OCI-LY7 (cell line): ENCODE measurements at regions of chr14 and their contacts with region 1.

Region 1: GRCh38 chr14:49633640-49634546 is 1.2 kb downstream of the DNAAF2 start:
- DNase-seq: peak; percentile 98
- H3K4me3 ChIP-seq: peak overlapping the region; percentile 78
- H3K27ac ChIP-seq: peak overlapping the region; percentile 93
- H3K4me1 ChIP-seq: peaks cover 31% of the 10 kb centered on the region
- CTCF ChIP-seq: peak; percentile 87

Region 2: DNA sequence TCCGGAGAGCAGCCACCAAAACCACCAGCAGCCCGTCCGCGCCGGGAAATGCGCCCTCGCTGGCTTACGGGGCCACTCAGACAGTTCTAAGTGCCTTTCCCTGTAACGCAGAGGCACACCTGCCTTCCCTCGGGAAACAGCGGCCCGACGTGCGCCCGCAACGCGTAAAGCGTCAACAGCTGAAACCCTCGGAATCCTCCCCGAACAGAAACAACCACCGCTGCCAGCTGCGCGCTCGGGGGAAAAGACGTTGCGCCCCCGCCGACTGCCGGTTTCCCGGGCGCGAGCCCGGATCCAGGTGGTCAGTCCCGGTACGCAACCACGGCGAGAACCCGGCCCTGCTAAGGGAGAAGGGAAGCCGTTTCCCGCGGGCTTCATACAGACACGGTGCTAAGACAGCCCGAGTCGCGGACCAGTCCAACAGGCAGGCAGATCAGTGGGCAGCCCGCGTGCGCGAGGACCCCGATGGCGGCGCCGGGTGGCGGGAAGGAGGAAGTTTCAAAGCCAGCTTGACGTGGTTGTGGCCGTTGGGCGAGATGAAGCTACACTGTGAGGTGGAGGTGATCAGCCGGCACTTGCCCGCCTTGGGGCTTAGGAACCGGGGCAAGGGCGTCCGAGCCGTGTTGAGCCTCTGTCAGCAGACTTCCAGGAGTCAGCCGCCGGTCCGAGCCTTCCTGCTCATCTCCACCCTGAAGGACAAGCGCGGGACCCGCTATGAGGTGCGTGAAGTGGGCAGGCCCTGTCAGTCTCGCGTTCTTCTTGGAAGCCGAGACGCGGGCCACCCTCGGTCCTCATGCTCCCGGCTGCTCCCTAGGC is 35.2 kb before region 1 on chr14 and contains the start of gene LRR1:
- CTCF ChIA-PET with region 1: interaction called, 5 read pairs
- POLR2A ChIA-PET with region 1: interaction called, 6 read pairs
- intact Hi-C with region 1: loop called (anchors 1 kb)
- DNase-seq: peak; percentile 88
- H3K4me3 ChIP-seq: peak within 1 kb of the TSS; percentile 99
- H3K27ac ChIP-seq: peak within 1 kb of the TSS; percentile 94
- H3K4me1 ChIP-seq: peaks cover 40% of the 10 kb centered on the region
- CTCF ChIP-seq: no peak
- total RNA-seq, gene LRR1: 83.4 and 89.8 TPM in 2 replicates

Region 3: DNA sequence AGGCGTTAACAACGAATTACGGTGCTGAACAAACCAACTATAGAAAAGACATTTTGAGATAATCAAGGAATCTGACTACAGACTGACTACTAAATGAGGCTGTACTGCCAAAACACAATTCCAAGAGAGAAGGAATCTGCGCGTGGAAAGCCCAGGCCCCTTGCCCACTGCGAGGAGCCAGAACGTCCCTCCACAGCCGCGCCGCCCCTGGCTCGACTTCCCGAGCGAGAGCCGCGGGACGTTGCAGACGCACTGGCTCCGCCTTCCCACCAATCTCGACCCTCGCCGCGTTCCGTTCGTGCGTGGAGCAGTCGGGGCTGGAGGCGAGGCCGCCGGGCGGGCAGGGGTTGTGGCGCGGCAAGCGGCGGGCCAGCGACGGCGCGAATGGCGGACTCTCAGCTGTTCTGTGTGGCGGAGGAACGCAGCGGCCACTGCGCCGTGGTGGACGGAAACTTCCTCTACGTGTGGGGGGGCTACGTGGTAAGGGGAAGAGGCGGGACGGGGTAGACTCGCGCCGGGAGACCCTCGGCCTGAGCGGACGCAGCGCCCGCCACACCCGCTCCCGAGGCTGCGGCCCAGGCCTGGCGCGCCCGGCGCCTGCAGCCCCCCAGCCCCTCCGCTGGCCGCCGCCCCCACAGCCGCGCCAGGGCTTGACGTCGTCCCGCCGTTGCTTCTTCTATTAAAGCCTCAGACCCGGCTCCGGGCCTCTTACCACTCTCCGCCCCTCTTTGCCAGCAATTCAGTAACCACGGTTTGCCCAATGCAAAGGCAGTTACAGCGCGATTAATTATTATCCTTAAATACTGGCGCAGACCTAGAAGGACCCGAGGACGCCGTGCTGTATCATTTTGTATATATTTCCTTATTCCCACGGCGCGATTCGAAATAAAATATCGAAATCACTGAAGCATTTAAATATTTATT is 59.2 kb after region 1 on chr14 and contains the start of gene KLHDC1:
- CTCF ChIA-PET with region 1: no interaction called
- POLR2A ChIA-PET with region 1: interaction called, 5 read pairs
- intact Hi-C with region 1: loop called (anchors 2 kb)
- DNase-seq: peak; percentile 63
- H3K4me3 ChIP-seq: peak within 1 kb of the TSS; percentile 66
- H3K27ac ChIP-seq: no peak within 1 kb of the TSS
- H3K4me1 ChIP-seq: peaks cover 26% of the 10 kb centered on the region
- CTCF ChIP-seq: no peak
- total RNA-seq, gene KLHDC1: 0.25 and 0.26 TPM in 2 replicates

Region 4: GRCh38 chr14:49828640-49829039 is 194.7 kb after region 1 on chr14:
- CTCF ChIA-PET with region 1: no interaction called
- POLR2A ChIA-PET with region 1: interaction called, 5 read pairs
- intact Hi-C with region 1: loop called (anchors 1 kb)
- DNase-seq: no peak
- H3K4me3 ChIP-seq: no peak overlapping the region
- H3K27ac ChIP-seq: no peak overlapping the region
- H3K4me1 ChIP-seq: no peaks in the 10 kb centered on the region
- CTCF ChIP-seq: no peak

Region 5: DNA sequence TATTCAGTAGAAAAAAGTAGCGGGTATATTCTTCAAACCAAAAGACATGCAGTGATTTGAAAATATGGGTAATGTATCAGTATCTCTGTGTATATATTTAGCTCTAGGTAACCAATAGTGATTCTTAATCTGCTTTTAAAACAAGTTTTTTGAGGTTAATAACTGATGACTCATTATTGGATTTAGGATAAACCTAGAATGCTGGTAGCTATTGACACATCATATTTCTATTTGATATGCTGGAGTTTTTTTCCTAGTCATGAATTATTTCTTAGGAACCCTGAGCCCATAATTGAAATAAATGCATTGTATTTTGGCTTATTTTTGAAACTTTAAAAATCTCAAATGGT is 274.5 kb after region 1 on chr14:
- CTCF ChIA-PET with region 1: no interaction called
- POLR2A ChIA-PET with region 1: no interaction called
- intact Hi-C with region 1: no loop called
- DNase-seq: no peak
- H3K4me3 ChIP-seq: no peak overlapping the region
- H3K27ac ChIP-seq: no peak overlapping the region
- H3K4me1 ChIP-seq: peaks cover 4% of the 10 kb centered on the region
- CTCF ChIP-seq: no peak

Region 6: DNA sequence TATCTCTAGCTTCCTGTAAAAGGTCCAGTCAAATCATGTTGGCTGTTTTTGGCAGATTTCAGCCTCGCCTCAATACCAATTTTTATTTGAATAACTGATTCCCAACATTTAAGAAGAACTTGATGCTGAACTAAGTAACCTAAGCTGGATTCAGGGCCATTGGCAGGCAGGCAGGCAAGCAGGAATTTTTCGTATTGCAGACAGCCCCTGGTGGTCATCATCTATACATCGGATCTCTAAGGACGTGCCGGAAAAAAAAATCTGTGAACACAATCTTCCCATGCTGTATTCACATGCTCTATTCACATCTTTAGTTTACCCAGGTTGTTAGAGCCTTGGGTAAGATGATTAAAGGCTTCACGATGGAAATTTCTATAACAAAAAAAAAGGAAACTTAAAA is 475.4 kb after region 1 on chr14:
- CTCF ChIA-PET with region 1: no interaction called
- POLR2A ChIA-PET with region 1: no interaction called
- intact Hi-C with region 1: loop called (anchors 2 kb)
- DNase-seq: no peak
- H3K4me3 ChIP-seq: no peak overlapping the region
- H3K27ac ChIP-seq: no peak overlapping the region
- H3K4me1 ChIP-seq: peaks cover 21% of the 10 kb centered on the region
- CTCF ChIP-seq: 0 out of 2 replicates have a peak, but pooled peaks have one; percentile 35

Region 7: DNA sequence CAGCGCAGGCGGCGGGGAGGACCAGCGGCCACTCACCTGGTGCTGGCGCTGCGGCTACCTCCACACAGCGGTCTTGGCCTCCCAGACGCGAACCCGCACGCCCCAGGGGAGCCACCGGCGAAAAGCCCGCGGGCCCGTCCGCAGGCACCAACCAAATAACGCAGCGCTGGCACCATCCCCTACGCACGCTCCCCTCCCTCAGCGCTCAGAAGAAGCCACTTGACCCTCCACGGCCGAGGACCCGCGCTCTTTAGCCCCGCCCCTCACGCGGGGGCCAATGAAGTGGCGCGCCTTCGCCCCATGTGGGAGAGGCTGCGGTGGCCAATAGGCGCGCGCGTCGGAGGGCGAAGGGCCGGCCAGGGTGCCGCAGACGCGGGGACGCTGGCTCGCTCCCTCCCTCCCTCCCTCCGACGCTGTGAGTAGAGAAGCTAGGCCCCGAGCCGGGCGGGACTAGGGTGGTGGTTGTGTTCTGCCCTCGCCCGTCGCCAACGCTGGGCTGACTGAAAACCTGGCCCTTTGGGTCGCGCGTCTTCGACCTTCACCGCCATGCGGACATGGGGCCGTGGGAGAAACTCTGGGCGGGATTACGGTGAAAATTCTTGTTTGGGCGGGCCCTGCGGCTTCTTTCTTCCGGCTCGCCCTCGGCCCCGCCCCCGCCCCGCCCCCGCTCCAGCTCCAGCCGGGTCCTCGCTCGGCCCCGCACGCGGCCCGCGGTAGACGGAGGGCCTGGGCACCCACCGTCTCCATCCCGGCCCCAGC is 678.3 kb after region 1 on chr14 and contains the starts of genes DMAC2L and L2HGDH:
- CTCF ChIA-PET with region 1: no interaction called
- POLR2A ChIA-PET with region 1: interaction called, 3 read pairs
- intact Hi-C with region 1: loop called (anchors 5 kb)
- DNase-seq: peak; percentile 97
- H3K4me3 ChIP-seq: peak within 1 kb of the TSS; percentile 73
- H3K27ac ChIP-seq: peak within 1 kb of the TSS; percentile 77
- H3K4me1 ChIP-seq: peaks cover 16% of the 10 kb centered on the region
- CTCF ChIP-seq: 0 out of 2 replicates have a peak, but pooled peaks have one; percentile 3
- total RNA-seq, gene DMAC2L: 5.8 and 13.8 TPM in 2 replicates
- total RNA-seq, gene L2HGDH: 8.7 and 10.0 TPM in 2 replicates